ENCODE measurements at regions of chr7 and their contacts with region 1.

Region 1: DNA sequence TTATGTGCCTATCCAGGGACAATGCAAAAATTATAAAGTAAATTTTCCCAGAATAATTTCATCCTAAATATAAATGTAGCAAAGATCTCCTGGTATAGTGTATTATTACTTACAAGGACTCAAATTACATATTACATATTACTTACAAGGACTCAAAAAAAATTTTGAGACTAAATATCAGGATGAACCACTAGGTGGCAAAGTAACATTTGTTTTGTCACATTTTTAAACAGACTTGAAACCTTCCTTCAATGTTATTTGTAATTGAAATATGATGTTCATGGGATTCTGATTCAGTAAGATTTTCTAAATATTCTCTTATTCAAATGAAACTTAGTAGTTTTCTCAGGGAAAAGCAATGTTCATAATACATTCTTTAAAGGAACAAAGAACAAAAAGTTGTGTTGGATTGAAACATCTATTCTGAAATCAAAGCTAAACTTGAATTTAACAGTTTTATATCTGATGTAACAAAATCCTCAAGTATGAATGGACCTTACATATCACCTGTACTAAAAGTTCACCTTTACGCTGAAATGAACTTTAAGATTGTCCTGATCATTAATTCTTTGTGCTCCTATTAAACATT is 74.3 kb upstream of the GNAI1 start:
- DNase-seq: peak; percentile 44
- H3K4me3 ChIP-seq: no peak overlapping the region
- H3K27ac ChIP-seq: no peak overlapping the region
- H3K4me1 ChIP-seq: peaks cover 0 to 3% of the 10 kb centered on the region in 2 experiments; a peak in 2 of 4 replicates
- H3K27me3 ChIP-seq: no peaks in the 10 kb centered on the region
- CTCF ChIP-seq: peak; percentile 87
- EP300 ChIP-seq: no peak
- RAD21 ChIP-seq: peak; percentile 83

Region 2: DNA sequence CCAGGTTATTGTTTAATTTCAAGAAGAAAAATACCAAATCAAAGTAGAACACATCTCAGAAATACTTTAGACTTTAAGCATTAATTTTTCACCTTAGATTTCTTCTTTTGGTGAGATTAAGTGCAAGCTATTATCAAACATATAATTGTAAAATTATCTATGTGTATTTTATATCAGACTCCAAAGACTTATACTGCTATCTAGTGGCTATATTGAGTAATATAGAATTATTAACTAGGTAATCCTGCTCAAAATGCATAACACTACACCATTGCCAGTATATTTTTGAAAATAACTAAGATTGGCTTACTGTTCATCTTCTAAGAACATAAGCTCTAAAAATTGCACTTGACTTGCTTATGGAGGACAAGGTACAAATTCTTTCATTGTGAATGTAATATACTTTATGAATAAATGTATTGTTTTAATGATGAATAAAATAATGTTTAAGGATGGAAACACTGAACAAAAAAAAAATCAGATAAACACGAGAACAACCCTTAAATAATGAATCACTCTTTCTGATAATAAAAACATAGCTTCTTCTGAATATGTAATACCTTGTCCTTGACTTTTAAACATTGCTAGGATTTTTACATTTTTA is 12.4 kb before region 1 on chr7:
- CTCF ChIA-PET with region 1: interaction called, 28 read pairs
- POLR2A ChIA-PET with region 1: no interaction called
- DNase-seq: peak; percentile 39
- H3K4me3 ChIP-seq: no peak overlapping the region
- H3K27ac ChIP-seq: no peak overlapping the region
- H3K4me1 ChIP-seq: no peaks in the 10 kb centered on the region
- H3K27me3 ChIP-seq: no peaks in the 10 kb centered on the region
- CTCF ChIP-seq: peak; percentile 89
- EP300 ChIP-seq: no peak
- RAD21 ChIP-seq: peak; percentile 70

Region 3: DNA sequence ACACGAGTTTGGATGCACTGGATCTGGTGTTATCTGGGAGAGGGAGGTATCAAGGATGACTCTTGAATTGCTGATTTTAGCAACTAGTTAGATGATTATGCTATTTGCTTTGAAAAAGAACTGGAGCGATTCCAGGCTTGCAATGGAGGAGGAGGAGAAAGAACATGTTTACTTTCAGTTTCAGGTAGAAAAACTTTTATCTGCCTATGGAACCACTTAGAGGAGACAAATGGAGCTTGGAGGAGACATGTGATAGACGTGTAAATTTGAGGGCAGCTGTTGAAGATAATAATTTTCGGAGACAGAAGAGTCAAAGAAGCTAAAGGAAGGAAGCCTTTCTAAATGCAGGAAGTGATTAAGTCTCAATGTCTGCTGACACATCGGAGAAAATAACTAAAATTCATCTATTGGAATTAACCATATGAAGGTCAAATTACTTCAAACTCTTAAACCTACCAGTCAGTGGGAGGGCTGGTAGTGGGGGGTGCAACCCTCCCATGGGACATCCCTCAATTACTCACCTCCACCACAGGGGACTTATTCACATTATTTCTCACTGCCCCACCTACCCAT is 17.9 kb after region 1 on chr7:
- CTCF ChIA-PET with region 1: interaction called, 35 read pairs
- POLR2A ChIA-PET with region 1: no interaction called
- DNase-seq: no peak
- H3K4me3 ChIP-seq: 0 out of 4 replicates have a peak overlapping the region, but pooled peaks of 1 of the 2 experiments have one; percentile 4
- H3K27ac ChIP-seq: no peak overlapping the region
- H3K4me1 ChIP-seq: 0 out of 4 replicates have a peak, but pooled peaks cover 0 to 6% of the 10 kb centered on the region in 2 experiments
- H3K27me3 ChIP-seq: no peaks in the 10 kb centered on the region
- CTCF ChIP-seq: no peak
- EP300 ChIP-seq: no peak
- RAD21 ChIP-seq: no peak

Region 4: GRCh38 chr7:80392229-80393169 is 332.2 kb after region 1 on chr7:
- CTCF ChIA-PET with region 1: interaction called, 26 read pairs
- POLR2A ChIA-PET with region 1: no interaction called
- DNase-seq: peak; percentile 20
- H3K4me3 ChIP-seq: no peak overlapping the region
- H3K27ac ChIP-seq: peak overlapping the region in 1 of 2 experiments; percentile 16; a peak in 1 of 4 replicates
- H3K4me1 ChIP-seq: peaks cover 0 to 9% of the 10 kb centered on the region in 2 experiments; a peak in 2 of 4 replicates
- H3K27me3 ChIP-seq: no peaks in the 10 kb centered on the region
- CTCF ChIP-seq: peak; percentile 86
- EP300 ChIP-seq: no peak
- RAD21 ChIP-seq: peak; percentile 70

Region 5: GRCh38 chr7:80453699-80454340 is 393.5 kb after region 1 on chr7:
- CTCF ChIA-PET with region 1: interaction called, 23 read pairs
- POLR2A ChIA-PET with region 1: no interaction called
- DNase-seq: peak; percentile 45
- H3K4me3 ChIP-seq: no peak overlapping the region
- H3K27ac ChIP-seq: peak overlapping the region in 1 of 2 experiments; percentile 9; a peak in 1 of 4 replicates
- H3K4me1 ChIP-seq: peaks cover 0 to 5% of the 10 kb centered on the region in 2 experiments; a peak in 2 of 4 replicates
- H3K27me3 ChIP-seq: no peaks in the 10 kb centered on the region
- CTCF ChIP-seq: peak; percentile 93
- EP300 ChIP-seq: no peak
- RAD21 ChIP-seq: peak; percentile 91